ENCODE measurements at regions of chr2 and their contacts with region 1.

Region 1: DNA sequence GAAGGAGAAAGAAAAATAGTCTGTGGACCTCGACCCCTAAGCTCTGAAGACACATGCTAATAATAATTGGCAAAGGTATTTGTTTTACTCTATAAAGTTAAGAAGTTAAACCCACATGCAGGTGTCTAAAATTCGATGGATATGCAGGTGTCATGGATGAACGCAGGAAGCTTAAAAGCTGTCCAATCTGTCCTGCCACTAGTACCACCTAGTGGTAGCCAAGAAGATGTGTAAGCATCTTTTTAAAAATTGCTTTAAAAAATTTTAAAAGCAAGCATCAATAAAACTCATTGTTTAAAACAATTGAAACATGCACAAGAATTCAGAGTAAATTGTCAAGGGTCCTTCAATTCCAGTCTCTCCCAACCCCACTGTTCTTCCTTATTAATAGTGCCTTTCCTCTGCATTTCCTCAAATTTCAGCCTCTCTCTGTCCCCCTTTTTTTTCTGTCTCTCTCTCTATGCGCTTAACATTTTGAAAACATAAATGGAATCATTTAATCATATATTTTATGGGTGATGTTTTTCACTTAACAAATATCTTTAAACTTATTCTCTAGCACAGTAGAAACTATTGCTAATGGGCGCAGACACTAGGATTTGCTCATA is 30.6 kb upstream of the PPP3R1 start:
- DNase-seq: peak; percentile 56

Region 2: DNA sequence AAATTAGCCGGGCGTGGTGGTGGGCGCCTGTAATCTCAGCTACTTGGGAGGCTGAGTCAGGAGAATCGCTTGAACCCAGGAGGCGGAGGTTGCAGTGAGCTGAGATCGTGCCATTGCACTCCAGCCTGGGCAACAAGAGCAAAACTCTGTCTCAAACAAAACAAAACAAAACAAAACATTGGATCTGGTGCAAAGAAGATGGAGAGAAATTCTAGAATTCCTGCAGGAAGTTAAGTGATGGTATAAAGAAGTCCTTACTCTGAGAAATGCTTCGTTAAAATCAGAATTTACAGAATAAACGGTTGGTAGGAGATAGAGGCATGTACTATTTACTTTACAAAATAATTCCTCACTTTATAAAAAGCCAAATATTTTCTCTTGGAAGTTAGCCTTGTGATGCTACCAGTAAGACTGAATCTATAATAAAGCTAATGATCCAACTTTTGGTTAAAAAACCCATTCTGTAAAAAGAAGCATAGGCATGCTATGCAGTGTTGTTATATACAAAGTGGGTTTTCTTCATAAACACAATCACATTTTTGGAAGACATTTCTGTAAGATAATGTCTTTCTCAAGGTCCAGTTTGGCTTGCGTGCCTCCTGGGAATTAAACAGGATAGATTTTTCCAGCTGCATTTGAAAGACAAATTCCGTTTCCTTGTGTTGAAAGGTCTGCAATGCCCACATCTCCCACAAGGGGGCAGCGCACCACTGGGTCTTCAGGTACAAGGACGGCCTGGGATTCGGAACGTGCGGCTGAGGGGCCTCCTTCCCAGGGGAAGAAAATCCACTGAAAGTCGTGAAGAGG is 160.8 kb before region 1 on chr2:
- CTCF ChIA-PET with region 1: interaction called, 10 read pairs
- POLR2A ChIA-PET with region 1: no interaction called
- DNase-seq: peak; percentile 84

Region 3: DNA sequence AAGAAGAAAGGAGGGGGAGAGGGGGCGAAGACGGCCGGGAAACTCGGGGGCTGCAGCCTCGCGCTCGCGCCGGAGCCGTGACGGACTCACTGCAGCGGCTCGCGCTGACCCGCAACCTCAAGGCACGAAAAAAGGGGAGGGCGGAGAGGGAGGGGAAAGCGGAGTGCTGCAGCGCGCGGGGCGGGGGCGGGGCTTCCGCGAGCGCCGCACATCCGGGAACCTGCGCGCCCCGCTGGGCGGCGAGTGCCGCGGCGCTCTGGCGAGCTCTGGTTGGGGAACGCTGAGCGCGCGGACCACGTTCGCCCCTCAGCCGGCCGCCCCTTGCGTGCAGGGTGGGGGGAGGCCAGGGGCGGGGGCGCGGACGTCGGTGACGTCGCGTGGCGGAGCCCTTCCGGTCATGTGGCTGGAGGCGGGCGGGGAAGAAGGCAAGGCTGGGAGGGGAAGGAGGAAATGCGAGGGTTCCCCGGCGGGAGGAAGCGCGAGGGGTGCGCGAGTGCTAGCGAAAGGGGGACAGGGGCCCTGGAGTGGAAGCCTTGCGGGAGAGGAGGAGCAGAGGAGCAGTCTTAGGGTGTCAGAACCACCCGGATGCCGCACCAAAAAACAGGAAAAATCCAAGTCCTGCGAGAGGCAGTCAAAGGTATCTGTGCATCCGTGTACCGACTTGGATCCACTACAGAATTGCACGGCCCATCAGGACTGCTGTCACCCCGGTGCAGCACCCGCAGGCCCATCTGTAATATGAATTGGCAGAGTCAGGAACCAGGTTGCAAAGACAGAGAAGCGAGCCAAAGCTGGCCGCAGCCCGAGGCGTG is 30.3 kb before region 1 on chr2 and contains the start of gene PPP3R1:
- CTCF ChIA-PET with region 1: no interaction called
- POLR2A ChIA-PET with region 1: no interaction called
- DNase-seq: peak; percentile 90